HEK293 (cell line): ENCODE measurements at regions of chr3 and their contacts with region 1.

Region 1: DNA sequence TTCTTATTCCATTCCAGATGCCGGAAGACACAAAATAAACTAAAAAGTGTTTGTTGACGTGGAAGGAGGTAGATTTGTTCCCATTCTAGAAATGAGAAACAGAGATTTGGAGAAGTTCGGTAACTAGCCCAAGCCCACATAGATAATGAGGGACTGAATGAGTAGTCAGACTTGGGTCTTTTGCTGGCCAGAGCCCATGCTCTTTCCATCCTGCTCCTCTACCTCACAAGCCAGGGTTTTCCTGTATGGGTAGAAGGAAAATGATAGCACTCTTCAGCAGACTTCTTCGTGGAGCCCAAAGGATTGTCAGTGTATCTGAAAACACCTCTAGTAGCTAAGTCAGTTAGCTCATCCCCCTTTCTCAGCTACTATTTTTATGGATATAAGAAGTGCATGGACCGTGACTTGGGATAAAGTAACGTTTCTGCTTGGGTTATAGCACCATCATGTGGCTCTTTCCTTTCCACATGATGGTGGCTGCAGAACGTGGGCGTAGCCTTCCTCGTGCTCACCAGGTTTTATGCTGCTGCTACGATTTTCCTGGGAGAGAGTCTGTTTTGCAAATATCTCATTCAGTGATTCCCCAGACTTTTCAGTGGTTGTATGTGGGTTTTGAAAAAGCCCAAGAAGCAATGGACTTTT is 84.6 kb downstream of the DGKG start:
- H3K4me3 ChIP-seq: no peak overlapping the region
- H3K27ac ChIP-seq: no peak overlapping the region
- H3K4me1 ChIP-seq: no peaks in the 10 kb centered on the region
- CTCF ChIP-seq: peak; percentile 25; the same call in 1 of the 2 replicates

Region 2: DNA sequence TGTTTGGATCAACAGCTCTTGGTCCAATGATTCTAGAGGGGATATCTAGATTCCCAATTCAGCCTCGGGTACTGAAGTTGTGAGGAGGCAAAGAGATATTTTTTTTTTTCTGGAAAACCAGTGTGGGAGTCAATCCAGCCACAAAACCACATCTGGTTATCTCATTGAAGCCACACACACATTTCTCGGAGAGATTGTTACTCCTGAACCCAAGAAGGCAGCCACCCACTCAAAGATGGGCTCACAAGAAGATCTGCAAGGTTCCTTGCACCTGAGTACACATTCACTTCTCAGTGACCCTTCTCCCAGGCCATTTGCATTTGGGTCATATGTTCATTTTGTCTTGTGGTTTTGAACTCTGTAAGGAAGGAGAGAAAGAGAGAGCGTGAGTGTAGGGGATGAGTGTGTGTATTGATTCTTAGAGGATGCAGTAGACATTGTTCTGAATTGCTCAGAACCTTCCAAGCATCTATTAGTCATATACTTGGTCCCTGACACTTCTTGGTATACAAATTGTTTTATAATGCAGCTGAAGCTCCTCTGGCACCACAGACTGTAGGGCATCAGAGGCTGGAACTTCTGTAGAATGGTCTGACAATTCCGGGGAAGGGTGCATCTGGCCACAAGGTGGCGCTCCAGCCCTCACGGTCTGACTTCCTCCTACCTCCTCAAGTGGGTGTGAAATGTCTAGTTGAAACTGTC is 300.3 kb before region 1 on chr3:
- CTCF ChIA-PET with region 1: interaction called, 29 read pairs
- POLR2A ChIA-PET with region 1: no interaction called
- H3K4me3 ChIP-seq: no peak overlapping the region
- H3K27ac ChIP-seq: no peak overlapping the region
- H3K4me1 ChIP-seq: no peaks in the 10 kb centered on the region
- CTCF ChIP-seq: peak; percentile 52

Region 3: GRCh38 chr3:185983495-185984141 is 293.8 kb before region 1 on chr3:
- CTCF ChIA-PET with region 1: interaction called, 29 read pairs
- POLR2A ChIA-PET with region 1: no interaction called
- H3K4me3 ChIP-seq: no peak overlapping the region
- H3K27ac ChIP-seq: no peak overlapping the region
- H3K4me1 ChIP-seq: no peaks in the 10 kb centered on the region
- CTCF ChIP-seq: peak; percentile 45; the same call in 1 of the 2 replicates

Region 4: GRCh38 chr3:186259612-186260383 is 17.6 kb before region 1 on chr3:
- CTCF ChIA-PET with region 1: interaction called, 33 read pairs
- POLR2A ChIA-PET with region 1: no interaction called
- H3K4me3 ChIP-seq: no peak overlapping the region
- H3K27ac ChIP-seq: no peak overlapping the region
- H3K4me1 ChIP-seq: no peaks in the 10 kb centered on the region
- CTCF ChIP-seq: peak; percentile 58; the same call in 1 of the 2 replicates